IMR-90 (cell line): ENCODE measurements at regions of chr1 and their contacts with region 1.

Region 1: GRCh38 chr1:31822766-31823165 is 6.9 kb upstream of the SPOCD1 start:
- DNase-seq: peak; percentile 39
- ATAC-seq: peak; percentile 42
- H3K4me3 ChIP-seq: no peak overlapping the region
- H3K27ac ChIP-seq: no peak overlapping the region
- H3K4me1 ChIP-seq: no peaks in the 10 kb centered on the region; the same call in 1 of the 2 replicates
- H3K27me3 ChIP-seq: no peaks in the 10 kb centered on the region
- CTCF ChIP-seq: no peak
- POLR2A ChIP-seq: no peak
- RAD21 ChIP-seq: no peak

Region 2: GRCh38 chr1:31617917-31618660 is 204.7 kb before region 1 on chr1:
- CTCF ChIA-PET with region 1: no interaction called
- POLR2A ChIA-PET with region 1: no interaction called
- dilution Hi-C with region 1: no loop called
- in situ Hi-C with region 1: no loop called
- intact Hi-C with region 1: no loop called
- DNase-seq: peak; percentile 12
- ATAC-seq: peak; percentile 91
- H3K4me3 ChIP-seq: peak overlapping the region; percentile 54
- H3K27ac ChIP-seq: no peak overlapping the region
- H3K4me1 ChIP-seq: no peaks in the 10 kb centered on the region; the same call in 1 of the 2 replicates
- H3K27me3 ChIP-seq: peaks cover 38% of the 10 kb centered on the region
- CTCF ChIP-seq: peak; percentile 70
- POLR2A ChIP-seq: no peak
- RAD21 ChIP-seq: peak; percentile 42

Region 3: DNA sequence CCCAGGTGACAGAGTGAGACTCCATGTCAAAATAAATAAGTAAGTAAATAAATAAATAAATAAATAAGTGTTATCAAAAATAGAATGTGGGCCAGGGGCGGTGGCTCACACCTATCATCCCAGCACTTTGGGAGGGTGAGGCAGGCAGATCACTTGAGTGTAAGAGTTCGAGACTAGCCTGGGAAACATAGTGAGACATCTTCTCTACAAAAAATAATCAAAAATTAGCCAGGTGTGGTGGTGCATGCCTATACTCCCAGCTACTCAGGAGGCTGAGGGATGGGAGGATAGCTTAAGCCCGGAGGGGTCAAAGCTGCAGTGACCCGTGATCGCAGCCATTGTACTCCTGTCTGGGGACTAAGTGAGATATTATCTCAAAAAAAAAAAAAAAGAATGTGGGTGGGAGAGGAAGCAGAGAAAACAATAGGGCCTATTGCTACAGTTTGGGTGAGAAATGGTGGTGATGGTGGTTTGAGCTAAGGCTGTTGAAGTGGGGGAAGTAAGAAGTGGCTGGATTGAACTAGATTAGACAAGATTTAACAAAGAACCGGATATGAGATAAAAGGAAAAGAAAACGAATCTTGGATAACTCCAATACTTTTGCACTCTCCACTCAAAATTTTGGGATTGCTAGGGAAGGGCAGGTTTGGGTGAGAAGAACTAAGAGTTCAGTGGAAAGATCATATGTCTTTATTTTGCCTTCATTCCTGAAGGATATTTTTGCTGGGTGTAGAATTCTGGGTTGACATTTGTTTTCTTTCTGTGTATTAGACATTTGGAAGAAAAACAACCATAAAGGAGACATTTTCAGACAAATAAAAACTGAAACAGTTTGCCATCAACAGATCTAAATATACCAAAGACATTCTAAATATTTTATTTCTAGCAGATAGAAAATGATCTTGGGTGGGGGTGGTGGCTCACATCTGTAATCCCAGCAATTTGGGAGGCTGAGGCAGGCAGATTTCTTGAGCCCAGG is 50.2 kb after region 1 on chr1:
- CTCF ChIA-PET with region 1: interaction called, 3 read pairs
- POLR2A ChIA-PET with region 1: no interaction called
- dilution Hi-C with region 1: no loop called
- in situ Hi-C with region 1: no loop called
- intact Hi-C with region 1: loop called (anchors 10 kb)
- DNase-seq: no peak
- ATAC-seq: no peak
- H3K4me3 ChIP-seq: no peak overlapping the region
- H3K27ac ChIP-seq: no peak overlapping the region
- H3K4me1 ChIP-seq: no peaks in the 10 kb centered on the region
- H3K27me3 ChIP-seq: peaks cover 3% of the 10 kb centered on the region; the same call in 1 of the 2 replicates
- CTCF ChIP-seq: no peak
- POLR2A ChIP-seq: no peak
- RAD21 ChIP-seq: no peak

Region 4: DNA sequence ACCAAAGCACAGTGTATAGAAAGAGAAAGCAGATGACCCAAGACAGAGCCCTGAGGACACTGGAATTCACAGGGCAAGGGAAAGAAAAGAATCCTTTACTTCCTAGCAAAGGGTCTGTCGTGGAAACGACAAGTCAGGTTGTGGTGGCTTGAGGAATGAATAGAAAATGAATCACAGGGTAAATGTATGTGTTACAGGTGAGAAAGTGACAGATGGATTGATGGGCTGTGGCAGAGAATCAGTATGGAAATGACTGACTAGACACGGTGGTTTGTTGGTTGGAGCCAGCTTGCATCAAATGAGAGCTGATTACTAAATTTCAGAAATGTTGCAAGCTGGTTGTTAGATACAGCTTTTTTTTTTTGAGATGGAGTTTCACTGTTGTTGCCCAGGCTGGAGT is 68.5 kb after region 1 on chr1:
- CTCF ChIA-PET with region 1: no interaction called
- POLR2A ChIA-PET with region 1: no interaction called
- dilution Hi-C with region 1: no loop called
- in situ Hi-C with region 1: no loop called
- intact Hi-C with region 1: no loop called
- DNase-seq: peak; percentile 16
- ATAC-seq: no peak
- H3K4me3 ChIP-seq: no peak overlapping the region
- H3K27ac ChIP-seq: no peak overlapping the region
- H3K4me1 ChIP-seq: peaks cover 3% of the 10 kb centered on the region; the same call in 1 of the 2 replicates
- H3K27me3 ChIP-seq: no peaks in the 10 kb centered on the region
- CTCF ChIP-seq: no peak
- POLR2A ChIP-seq: no peak
- RAD21 ChIP-seq: no peak

Region 5: GRCh38 chr1:32172621-32173245 is 350.0 kb after region 1 on chr1:
- CTCF ChIA-PET with region 1: no interaction called
- POLR2A ChIA-PET with region 1: no interaction called
- dilution Hi-C with region 1: no loop called
- in situ Hi-C with region 1: no loop called
- intact Hi-C with region 1: no loop called
- DNase-seq: peak; percentile 35
- ATAC-seq: peak; percentile 56
- H3K4me3 ChIP-seq: no peak overlapping the region
- H3K27ac ChIP-seq: no peak overlapping the region
- H3K4me1 ChIP-seq: no peaks in the 10 kb centered on the region; the same call in 1 of the 2 replicates
- H3K27me3 ChIP-seq: no peaks in the 10 kb centered on the region
- CTCF ChIP-seq: no peak
- POLR2A ChIP-seq: no peak
- RAD21 ChIP-seq: no peak